ENCODE measurements at regions of chr12 and their contacts with region 1.

Region 1: GRCh38 chr12:3342056-3342455 is 148.9 kb upstream of the PRMT8 start:
- DNase-seq: peak; percentile 61
- H3K4me3 ChIP-seq: no peak overlapping the region
- H3K4me3 Mint-ChIP-seq: no peak overlapping the region
- H3K27ac Mint-ChIP-seq: no peak overlapping the region
- H3K4me1 ChIP-seq: no peaks in the 10 kb centered on the region
- H3K4me1 Mint-ChIP-seq: no peaks in the 10 kb centered on the region
- H3K27me3 ChIP-seq: 0 out of 2 replicates have a peak, but pooled peaks cover 1% of the 10 kb centered on the region
- H3K27me3 Mint-ChIP-seq: peaks cover 23% of the 10 kb centered on the region
- CTCF ChIP-seq: peak; percentile 54 to 75

Region 2: DNA sequence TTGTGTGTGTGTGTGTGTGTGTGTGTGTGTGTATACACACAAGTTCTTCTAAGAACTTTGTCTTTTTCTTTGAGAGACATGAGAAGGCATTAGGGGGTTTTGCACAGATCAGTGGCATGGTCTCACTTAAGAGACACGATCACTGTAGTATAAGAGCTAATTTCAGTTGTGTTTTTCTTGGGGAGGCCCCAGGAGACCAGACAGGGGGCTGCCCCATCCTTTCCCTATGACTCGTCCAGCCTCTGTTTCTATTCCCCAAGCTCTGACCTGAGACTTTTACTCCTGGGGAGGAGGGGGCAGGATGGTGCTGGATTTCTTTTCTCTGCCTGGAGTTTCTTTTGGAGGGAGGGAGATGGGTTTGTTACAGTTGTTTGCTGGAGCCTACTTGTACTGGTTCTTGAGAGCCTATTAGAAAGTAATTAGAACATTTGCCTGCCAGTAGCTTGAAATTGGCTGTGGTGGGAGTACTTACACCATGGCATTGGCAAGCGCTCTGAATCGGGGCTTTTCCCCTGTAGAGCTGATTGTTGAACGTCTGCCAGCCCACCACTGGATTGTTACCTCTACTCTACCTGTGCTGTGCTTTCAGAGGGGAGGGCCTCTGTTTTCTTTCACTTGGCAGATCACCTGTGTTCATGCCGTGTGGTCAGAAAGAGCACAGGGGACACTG is 155.4 kb before region 1 on chr12:
- CTCF ChIA-PET with region 1: no interaction called
- POLR2A ChIA-PET with region 1: no interaction called
- intact Hi-C with region 1: no loop called
- DNase-seq: no peak
- H3K4me3 ChIP-seq: no peak overlapping the region
- H3K4me3 Mint-ChIP-seq: no peak overlapping the region
- H3K27ac Mint-ChIP-seq: no peak overlapping the region
- H3K4me1 ChIP-seq: no peaks in the 10 kb centered on the region
- H3K4me1 Mint-ChIP-seq: peaks cover 6% of the 10 kb centered on the region
- H3K27me3 ChIP-seq: no peaks in the 10 kb centered on the region
- H3K27me3 Mint-ChIP-seq: no peaks in the 10 kb centered on the region
- CTCF ChIP-seq: no peak

Region 3: GRCh38 chr12:3644104-3644503 is 302.0 kb after region 1 on chr12:
- CTCF ChIA-PET with region 1: no interaction called
- POLR2A ChIA-PET with region 1: no interaction called
- intact Hi-C with region 1: loop called (anchors 1 kb)
- DNase-seq: no peak
- H3K4me3 ChIP-seq: no peak overlapping the region
- H3K4me3 Mint-ChIP-seq: no peak overlapping the region
- H3K27ac Mint-ChIP-seq: no peak overlapping the region
- H3K4me1 ChIP-seq: no peaks in the 10 kb centered on the region; the same call in 1 of the 2 replicates
- H3K4me1 Mint-ChIP-seq: peaks cover 6% of the 10 kb centered on the region
- H3K27me3 ChIP-seq: no peaks in the 10 kb centered on the region
- H3K27me3 Mint-ChIP-seq: no peaks in the 10 kb centered on the region
- CTCF ChIP-seq: no peak

Measured in Caco-2 (cell line).